ENCODE measurements at regions of chr19 and their contacts with region 1.

Region 1: GRCh38 chr19:9768175-9769112 is at the start of gene ZNF846:
- DNase-seq: peak; percentile 91
- ATAC-seq: peak; percentile 98
- H3K4me3 Mint-ChIP-seq: peak within 1 kb of the TSS; percentile 90
- H3K27ac Mint-ChIP-seq: peak within 1 kb of the TSS; percentile 94
- H3K4me1 Mint-ChIP-seq: peaks cover 9% of the 10 kb centered on the region
- H3K27me3 Mint-ChIP-seq: no peaks in the 10 kb centered on the region
- CTCF ChIP-seq: no peak
- total RNA-seq, gene ZNF846: 7.9 and 10.7 TPM in 2 replicates

Region 2: DNA sequence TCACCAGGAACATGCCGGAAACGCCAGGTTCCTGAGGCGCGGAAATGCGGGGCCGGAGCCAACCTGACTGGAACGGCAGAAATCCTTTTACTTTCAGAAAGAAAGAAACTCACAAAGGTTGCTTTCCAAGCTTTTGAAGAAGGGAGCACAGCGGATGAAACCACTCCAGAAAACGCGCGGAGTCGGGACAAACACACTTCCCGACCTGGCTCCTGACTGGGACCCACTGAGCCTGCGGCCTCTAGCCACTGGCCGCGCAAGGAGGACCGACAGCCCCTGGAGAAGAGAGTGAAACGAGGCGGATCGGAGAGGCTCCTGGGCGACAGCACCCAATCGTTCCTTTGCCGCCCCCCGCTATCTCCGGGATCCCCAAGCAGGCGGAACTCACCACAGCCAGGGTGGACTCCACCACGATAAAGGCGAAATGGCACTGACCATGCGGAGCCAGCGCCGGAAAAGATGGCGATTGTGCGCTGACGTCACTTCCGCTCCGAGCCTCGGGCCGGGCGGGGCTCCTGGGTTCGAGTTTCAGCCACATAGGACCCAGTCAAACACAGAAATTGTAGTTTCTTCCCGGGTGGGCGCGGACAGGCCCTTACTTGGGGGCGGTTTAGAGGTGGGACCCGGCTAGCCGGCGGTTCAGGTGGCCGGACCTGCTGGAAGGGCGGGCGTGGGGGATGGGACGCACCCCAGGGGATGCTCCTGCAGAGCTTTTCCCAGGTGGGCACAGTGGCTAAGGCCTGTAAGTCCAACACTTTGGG is 184.2 kb before region 1 on chr19 and contains the start of gene ZNF121:
- CTCF ChIA-PET with region 1: no interaction called
- POLR2A ChIA-PET with region 1: no interaction called
- intact Hi-C with region 1: loop called (anchors 1 kb)
- DNase-seq: peak; percentile 80
- ATAC-seq: peak; percentile 84
- H3K4me3 Mint-ChIP-seq: peak within 1 kb of the TSS; percentile 95
- H3K27ac Mint-ChIP-seq: peak within 1 kb of the TSS; percentile 94
- H3K4me1 Mint-ChIP-seq: peaks cover 46% of the 10 kb centered on the region
- H3K27me3 Mint-ChIP-seq: peaks cover 6% of the 10 kb centered on the region
- CTCF ChIP-seq: no peak
- total RNA-seq, gene ZNF121: 53.7 and 57.0 TPM in 2 replicates

Region 3: GRCh38 chr19:9674663-9675357 is 93.6 kb before region 1 on chr19 and contains the start of gene ZNF562:
- CTCF ChIA-PET with region 1: no interaction called
- POLR2A ChIA-PET with region 1: interaction called, 12 read pairs
- intact Hi-C with region 1: loop called (anchors 1 kb)
- DNase-seq: peak; percentile 78
- ATAC-seq: peak; percentile 91
- H3K4me3 Mint-ChIP-seq: peak within 1 kb of the TSS; percentile 99
- H3K27ac Mint-ChIP-seq: peak within 1 kb of the TSS; percentile 98
- H3K4me1 Mint-ChIP-seq: peaks cover 29% of the 10 kb centered on the region
- H3K27me3 Mint-ChIP-seq: no peaks in the 10 kb centered on the region
- CTCF ChIP-seq: no peak
- total RNA-seq, gene ZNF562: 31.6 and 32.2 TPM in 2 replicates

Region 4: GRCh38 chr19:9785367-9786331 is 17.2 kb after region 1 on chr19:
- CTCF ChIA-PET with region 1: interaction called, 3 read pairs
- POLR2A ChIA-PET with region 1: interaction called, 11 read pairs
- intact Hi-C with region 1: loop called (anchors 1 kb)
- DNase-seq: peak; percentile 86
- ATAC-seq: peak; percentile 84
- H3K4me3 Mint-ChIP-seq: peak overlapping the region; percentile 91
- H3K27ac Mint-ChIP-seq: peak overlapping the region; percentile 96
- H3K4me1 Mint-ChIP-seq: peaks cover 15% of the 10 kb centered on the region
- H3K27me3 Mint-ChIP-seq: no peaks in the 10 kb centered on the region
- CTCF ChIP-seq: no peak

Region 5: GRCh38 chr19:9827289-9828238 is 59.1 kb after region 1 on chr19 and contains the start of gene UBL5:
- CTCF ChIA-PET with region 1: no interaction called
- POLR2A ChIA-PET with region 1: interaction called, 10 read pairs
- intact Hi-C with region 1: loop called (anchors 2 kb)
- DNase-seq: peak; percentile 81
- ATAC-seq: peak; percentile 95
- H3K4me3 Mint-ChIP-seq: peak within 1 kb of the TSS; percentile 100
- H3K27ac Mint-ChIP-seq: peak within 1 kb of the TSS; percentile 98
- H3K4me1 Mint-ChIP-seq: peaks cover 28% of the 10 kb centered on the region
- H3K27me3 Mint-ChIP-seq: no peaks in the 10 kb centered on the region
- CTCF ChIP-seq: no peak
- total RNA-seq, gene UBL5: 270 and 285 TPM in 2 replicates

Region 6: GRCh38 chr19:9834726-9835506 is 66.5 kb after region 1 on chr19 and contains the start of gene PIN1:
- CTCF ChIA-PET with region 1: no interaction called
- POLR2A ChIA-PET with region 1: interaction called, 4 read pairs
- intact Hi-C with region 1: loop called (anchors 1 kb)
- DNase-seq: peak; percentile 98
- ATAC-seq: peak; percentile 95
- H3K4me3 Mint-ChIP-seq: peak within 1 kb of the TSS; percentile 93
- H3K27ac Mint-ChIP-seq: peak within 1 kb of the TSS; percentile 94
- H3K4me1 Mint-ChIP-seq: peaks cover 12% of the 10 kb centered on the region
- H3K27me3 Mint-ChIP-seq: no peaks in the 10 kb centered on the region
- CTCF ChIP-seq: no peak
- total RNA-seq, gene PIN1: 57.1 and 66.0 TPM in 2 replicates